ENCODE measurements at regions of chr1 and their contacts with region 1.

Region 1: GRCh38 chr1:201895913-201896807 is 7.5 kb downstream of the SHISA4 start:
- DNase-seq: peak; percentile 97
- ATAC-seq: peak; percentile 85
- H3K4me3 Mint-ChIP-seq: peak overlapping the region; percentile 37; the same call in 1 of the 2 replicates
- H3K27ac Mint-ChIP-seq: peak overlapping the region; percentile 62
- H3K4me1 Mint-ChIP-seq: peaks cover 35% of the 10 kb centered on the region
- H3K27me3 Mint-ChIP-seq: peaks cover 4% of the 10 kb centered on the region
- CTCF ChIP-seq: peak; percentile 94

Region 2: GRCh38 chr1:201530741-201531531 is 365.2 kb before region 1 on chr1:
- CTCF ChIA-PET with region 1: interaction called, 14 read pairs
- POLR2A ChIA-PET with region 1: no interaction called
- DNase-seq: peak; percentile 90
- ATAC-seq: peak; percentile 96
- H3K4me3 Mint-ChIP-seq: no peak overlapping the region
- H3K27ac Mint-ChIP-seq: 0 out of 2 replicates have a peak overlapping the region, but pooled peaks have one; percentile 50
- H3K4me1 Mint-ChIP-seq: peaks cover 23% of the 10 kb centered on the region
- H3K27me3 Mint-ChIP-seq: 0 out of 2 replicates have a peak, but pooled peaks cover under 1% of the 10 kb centered on the region
- CTCF ChIP-seq: peak; percentile 62

Region 3: GRCh38 chr1:201783572-201783971 is 112.6 kb before region 1 on chr1:
- CTCF ChIA-PET with region 1: no interaction called
- POLR2A ChIA-PET with region 1: no interaction called
- DNase-seq: peak; percentile 21
- ATAC-seq: peak; percentile 39; the same call in 1 of the 2 replicates
- H3K4me3 Mint-ChIP-seq: no peak overlapping the region
- H3K27ac Mint-ChIP-seq: no peak overlapping the region
- H3K4me1 Mint-ChIP-seq: no peaks in the 10 kb centered on the region
- H3K27me3 Mint-ChIP-seq: no peaks in the 10 kb centered on the region
- CTCF ChIP-seq: no peak

Region 4: DNA sequence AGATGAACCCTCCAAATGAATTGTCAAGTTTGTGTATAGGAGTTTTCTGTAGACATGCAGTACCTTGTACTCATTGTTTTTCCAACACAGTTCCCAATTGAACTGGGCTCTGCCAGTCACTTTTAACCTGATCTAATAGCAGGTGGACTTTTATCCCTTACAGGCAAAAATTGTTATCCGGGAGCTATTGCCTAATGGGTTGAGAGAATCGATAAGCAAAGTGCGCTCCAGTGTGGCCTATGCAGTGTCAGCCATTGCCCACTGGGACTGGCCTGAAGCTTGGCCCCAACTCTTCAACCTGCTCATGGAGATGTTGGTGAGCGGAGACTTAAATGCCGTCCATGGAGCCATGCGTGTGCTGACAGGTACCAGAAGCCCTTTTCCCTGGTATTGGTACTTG is 47.9 kb before region 1 on chr1:
- CTCF ChIA-PET with region 1: no interaction called
- POLR2A ChIA-PET with region 1: no interaction called
- DNase-seq: no peak
- ATAC-seq: no peak
- H3K4me3 Mint-ChIP-seq: no peak overlapping the region
- H3K27ac Mint-ChIP-seq: no peak overlapping the region
- H3K4me1 Mint-ChIP-seq: no peaks in the 10 kb centered on the region
- H3K27me3 Mint-ChIP-seq: no peaks in the 10 kb centered on the region
- CTCF ChIP-seq: no peak

Region 5: GRCh38 chr1:201925301-201925567 is 29.1 kb after region 1 on chr1:
- CTCF ChIA-PET with region 1: interaction called, 11 read pairs
- POLR2A ChIA-PET with region 1: no interaction called
- DNase-seq: no peak
- ATAC-seq: no peak
- H3K4me3 Mint-ChIP-seq: no peak overlapping the region
- H3K27ac Mint-ChIP-seq: no peak overlapping the region
- H3K4me1 Mint-ChIP-seq: no peaks in the 10 kb centered on the region
- H3K27me3 Mint-ChIP-seq: no peaks in the 10 kb centered on the region; the same call in 1 of the 2 replicates
- CTCF ChIP-seq: no peak

Region 6: DNA sequence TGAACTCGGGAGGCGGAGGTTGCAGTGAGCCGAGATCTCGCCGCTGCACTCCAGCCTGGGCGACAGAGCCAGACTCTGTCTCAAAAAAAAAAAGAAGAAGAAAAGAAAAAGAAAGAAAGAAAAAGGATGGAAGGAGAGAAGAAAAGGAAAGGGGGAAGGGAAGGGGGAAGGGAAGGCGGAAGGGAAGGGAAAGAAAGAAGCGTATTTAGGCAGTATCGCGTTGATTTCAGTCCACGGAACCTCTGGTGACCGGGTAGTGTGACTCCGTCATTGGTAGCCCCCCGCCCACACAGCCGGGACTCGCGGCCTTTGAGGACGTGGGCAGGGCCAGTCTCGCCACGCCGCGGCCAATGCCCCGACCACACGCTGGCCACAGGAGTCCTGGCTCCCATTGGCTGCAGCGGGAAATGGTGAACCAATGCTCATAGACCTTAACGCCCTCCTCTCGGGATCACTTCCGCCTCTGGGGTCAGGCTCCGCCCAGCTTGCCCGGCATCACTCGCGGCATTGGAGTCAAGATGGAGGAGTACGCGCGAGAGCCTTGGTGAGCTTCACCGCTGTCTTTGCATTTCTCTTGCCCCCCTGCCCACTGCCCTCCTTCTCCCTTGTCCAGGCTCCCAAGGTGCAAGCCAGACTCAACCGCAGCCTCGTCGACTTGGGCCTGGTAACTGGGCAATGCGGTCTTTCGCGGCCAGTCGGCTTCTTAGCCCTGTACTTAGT is 59.0 kb after region 1 on chr1 and contains the start of gene TIMM17A:
- CTCF ChIA-PET with region 1: interaction called, 38 read pairs
- POLR2A ChIA-PET with region 1: interaction called, 7 read pairs
- DNase-seq: peak; percentile 94
- ATAC-seq: peak; percentile 99
- H3K4me3 Mint-ChIP-seq: peak within 1 kb of the TSS; percentile 97
- H3K27ac Mint-ChIP-seq: peak within 1 kb of the TSS; percentile 98
- H3K4me1 Mint-ChIP-seq: peaks cover 10% of the 10 kb centered on the region
- H3K27me3 Mint-ChIP-seq: no peaks in the 10 kb centered on the region
- CTCF ChIP-seq: no peak
- total RNA-seq, gene TIMM17A: 50.3 to 56.1 TPM (median 51.2 TPM) in 3 replicates

Region 7: DNA sequence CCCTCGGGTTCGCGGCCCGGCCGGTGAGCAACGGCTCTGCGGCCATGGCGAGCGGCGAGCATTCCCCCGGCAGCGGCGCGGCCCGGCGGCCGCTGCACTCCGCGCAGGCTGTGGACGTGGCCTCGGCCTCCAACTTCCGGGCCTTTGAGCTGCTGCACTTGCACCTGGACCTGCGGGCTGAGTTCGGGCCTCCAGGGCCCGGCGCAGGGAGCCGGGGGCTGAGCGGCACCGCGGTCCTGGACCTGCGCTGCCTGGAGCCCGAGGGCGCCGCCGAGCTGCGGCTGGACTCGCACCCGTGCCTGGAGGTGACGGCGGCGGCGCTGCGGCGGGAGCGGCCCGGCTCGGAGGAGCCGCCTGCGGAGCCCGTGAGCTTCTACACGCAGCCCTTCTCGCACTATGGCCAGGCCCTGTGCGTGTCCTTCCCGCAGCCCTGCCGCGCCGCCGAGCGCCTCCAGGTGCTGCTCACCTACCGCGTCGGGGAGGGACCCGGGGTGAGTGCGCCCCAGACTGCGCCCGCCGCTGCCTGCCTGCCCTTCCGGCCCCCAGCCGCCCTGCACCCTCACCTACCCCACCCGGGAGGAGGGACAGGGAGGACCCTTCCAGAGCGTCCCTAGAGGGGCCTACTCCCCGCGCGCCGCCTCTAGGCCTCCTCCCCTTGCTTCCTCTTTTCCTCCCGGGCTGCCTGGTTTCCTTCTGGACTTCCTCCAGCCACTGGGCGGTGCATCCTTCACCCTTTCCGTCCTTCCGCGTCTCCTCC is 86.6 kb after region 1 on chr1 and contains the start of gene RNPEP:
- CTCF ChIA-PET with region 1: interaction called, 26 read pairs
- POLR2A ChIA-PET with region 1: interaction called, 3 read pairs
- DNase-seq: peak; percentile 60
- ATAC-seq: peak; percentile 76
- H3K4me3 Mint-ChIP-seq: peak within 1 kb of the TSS; percentile 100
- H3K27ac Mint-ChIP-seq: peak within 1 kb of the TSS; percentile 96
- H3K4me1 Mint-ChIP-seq: peaks cover 26% of the 10 kb centered on the region
- H3K27me3 Mint-ChIP-seq: peaks cover 8% of the 10 kb centered on the region
- CTCF ChIP-seq: no peak
- total RNA-seq, gene RNPEP: 57.4 to 61.6 TPM (median 59.2 TPM) in 3 replicates

Region 8: DNA sequence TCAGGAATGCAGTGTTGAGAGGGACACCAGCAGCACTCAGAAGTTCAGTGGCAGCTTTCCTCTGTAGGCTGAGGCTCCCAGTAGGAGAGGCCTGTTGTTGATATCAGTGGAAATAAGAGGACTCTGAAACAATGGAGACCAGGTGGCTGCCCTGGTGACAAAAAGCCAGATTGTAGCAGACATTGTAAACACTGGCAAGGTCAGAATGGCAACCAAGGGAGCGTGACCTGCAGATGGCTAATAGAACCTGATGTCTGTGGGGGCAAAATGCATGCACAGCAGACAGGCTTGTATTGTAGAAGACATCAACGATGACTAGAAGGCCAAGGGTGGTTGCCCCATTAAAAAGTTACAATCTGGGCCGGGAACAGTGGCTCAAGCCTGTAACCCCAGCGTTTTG is 173.5 kb after region 1 on chr1:
- CTCF ChIA-PET with region 1: no interaction called
- POLR2A ChIA-PET with region 1: no interaction called
- DNase-seq: no peak
- ATAC-seq: no peak
- H3K4me3 Mint-ChIP-seq: no peak overlapping the region
- H3K27ac Mint-ChIP-seq: peak overlapping the region; percentile 49; the same call in 1 of the 2 replicates
- H3K4me1 Mint-ChIP-seq: peaks cover under 1% of the 10 kb centered on the region; the same call in 1 of the 2 replicates
- H3K27me3 Mint-ChIP-seq: no peaks in the 10 kb centered on the region; the same call in 1 of the 2 replicates
- CTCF ChIP-seq: no peak

Region 9: GRCh38 chr1:202112839-202113672 is 216.9 kb after region 1 on chr1:
- CTCF ChIA-PET with region 1: interaction called, 22 read pairs
- POLR2A ChIA-PET with region 1: no interaction called
- DNase-seq: no peak
- ATAC-seq: no peak; the same call in none of the 2 replicates
- H3K4me3 Mint-ChIP-seq: no peak overlapping the region
- H3K27ac Mint-ChIP-seq: no peak overlapping the region
- H3K4me1 Mint-ChIP-seq: peaks cover 25% of the 10 kb centered on the region
- H3K27me3 Mint-ChIP-seq: no peaks in the 10 kb centered on the region
- CTCF ChIP-seq: no peak